ENCODE measurements at regions of chr5 and their contacts with region 1.

Region 1: DNA sequence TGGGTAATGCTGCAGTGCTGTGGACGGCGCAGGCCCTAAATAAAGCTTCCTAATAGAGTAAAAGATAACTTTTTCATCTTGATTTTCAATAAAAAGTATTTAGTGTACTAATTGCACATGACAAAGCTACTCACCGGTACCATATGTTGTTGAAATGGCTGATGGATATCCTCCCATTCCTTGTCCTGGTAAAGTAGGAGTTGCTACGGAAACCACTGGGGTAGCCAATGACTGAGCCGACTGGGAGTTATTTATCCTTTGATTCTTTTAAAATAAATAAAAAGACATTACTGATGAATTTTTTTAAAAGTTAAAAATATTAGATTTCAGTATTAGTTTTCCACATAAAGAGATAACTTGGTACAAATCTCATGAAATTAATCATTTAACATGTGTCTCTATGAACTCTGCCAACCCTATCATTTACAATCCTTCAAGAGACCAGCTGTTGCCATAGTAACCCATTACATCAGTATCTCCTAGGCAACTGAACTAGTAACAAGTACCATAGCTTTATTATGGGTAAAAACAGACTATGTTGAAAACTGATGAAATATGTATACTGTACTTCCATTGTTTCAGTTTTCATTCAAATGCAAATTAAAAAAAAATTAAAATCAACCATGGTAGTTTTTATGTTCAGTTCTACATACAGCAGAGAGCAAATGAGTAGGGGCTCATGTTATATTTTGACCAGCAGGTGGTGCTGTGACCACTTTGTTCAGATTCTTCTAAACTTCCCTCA is 153.7 kb downstream of the MEF2C start:
- DNase-seq: peak; percentile 71
- ATAC-seq: peak; percentile 63
- H3K4me3 Mint-ChIP-seq: no peak overlapping the region
- H3K27ac Mint-ChIP-seq: no peak overlapping the region
- H3K4me1 Mint-ChIP-seq: peaks cover 3% of the 10 kb centered on the region
- H3K27me3 Mint-ChIP-seq: peaks cover 9% of the 10 kb centered on the region

Region 2: DNA sequence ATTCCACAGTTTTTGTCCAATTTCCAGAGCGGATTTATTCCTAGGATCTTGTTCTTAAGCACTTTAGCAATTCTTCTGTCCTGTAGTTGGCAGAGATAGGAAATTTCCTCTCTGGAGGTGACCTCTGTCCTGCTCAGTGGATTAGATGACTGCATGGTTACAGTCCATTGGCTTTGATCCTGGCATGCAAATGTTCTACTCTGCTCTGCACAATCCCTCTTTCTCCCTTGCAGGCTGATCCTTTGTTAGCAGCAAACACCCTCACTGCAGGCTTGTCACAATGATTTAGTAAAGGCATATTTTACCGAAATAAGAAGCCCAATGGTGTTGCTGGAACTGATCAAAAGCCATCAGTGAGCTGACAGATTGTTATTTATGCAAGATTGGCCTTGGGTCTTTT is 1867.7 kb before region 1 on chr5:
- CTCF ChIA-PET with region 1: no interaction called
- POLR2A ChIA-PET with region 1: no interaction called
- intact Hi-C with region 1: no loop called
- DNase-seq: no peak
- ATAC-seq: no peak
- H3K4me3 Mint-ChIP-seq: no peak overlapping the region
- H3K27ac Mint-ChIP-seq: no peak overlapping the region
- H3K4me1 Mint-ChIP-seq: no peaks in the 10 kb centered on the region
- H3K27me3 Mint-ChIP-seq: peaks cover 6% of the 10 kb centered on the region

Region 3: GRCh38 chr5:88690409-88691229 is 38.6 kb before region 1 on chr5:
- CTCF ChIA-PET with region 1: interaction called, 12 read pairs
- POLR2A ChIA-PET with region 1: no interaction called
- intact Hi-C with region 1: no loop called
- DNase-seq: peak; percentile 82
- ATAC-seq: peak; percentile 82
- H3K4me3 Mint-ChIP-seq: peak overlapping the region; percentile 38
- H3K27ac Mint-ChIP-seq: no peak overlapping the region
- H3K4me1 Mint-ChIP-seq: peaks cover 15% of the 10 kb centered on the region
- H3K27me3 Mint-ChIP-seq: peaks cover 84% of the 10 kb centered on the region

Region 4: GRCh38 chr5:88761269-88761850 is 32.1 kb after region 1 on chr5:
- CTCF ChIA-PET with region 1: interaction called, 12 read pairs
- POLR2A ChIA-PET with region 1: no interaction called
- intact Hi-C with region 1: no loop called
- DNase-seq: no peak
- ATAC-seq: no peak
- H3K4me3 Mint-ChIP-seq: no peak overlapping the region
- H3K27ac Mint-ChIP-seq: no peak overlapping the region
- H3K4me1 Mint-ChIP-seq: no peaks in the 10 kb centered on the region
- H3K27me3 Mint-ChIP-seq: peaks cover 15% of the 10 kb centered on the region

Region 5: DNA sequence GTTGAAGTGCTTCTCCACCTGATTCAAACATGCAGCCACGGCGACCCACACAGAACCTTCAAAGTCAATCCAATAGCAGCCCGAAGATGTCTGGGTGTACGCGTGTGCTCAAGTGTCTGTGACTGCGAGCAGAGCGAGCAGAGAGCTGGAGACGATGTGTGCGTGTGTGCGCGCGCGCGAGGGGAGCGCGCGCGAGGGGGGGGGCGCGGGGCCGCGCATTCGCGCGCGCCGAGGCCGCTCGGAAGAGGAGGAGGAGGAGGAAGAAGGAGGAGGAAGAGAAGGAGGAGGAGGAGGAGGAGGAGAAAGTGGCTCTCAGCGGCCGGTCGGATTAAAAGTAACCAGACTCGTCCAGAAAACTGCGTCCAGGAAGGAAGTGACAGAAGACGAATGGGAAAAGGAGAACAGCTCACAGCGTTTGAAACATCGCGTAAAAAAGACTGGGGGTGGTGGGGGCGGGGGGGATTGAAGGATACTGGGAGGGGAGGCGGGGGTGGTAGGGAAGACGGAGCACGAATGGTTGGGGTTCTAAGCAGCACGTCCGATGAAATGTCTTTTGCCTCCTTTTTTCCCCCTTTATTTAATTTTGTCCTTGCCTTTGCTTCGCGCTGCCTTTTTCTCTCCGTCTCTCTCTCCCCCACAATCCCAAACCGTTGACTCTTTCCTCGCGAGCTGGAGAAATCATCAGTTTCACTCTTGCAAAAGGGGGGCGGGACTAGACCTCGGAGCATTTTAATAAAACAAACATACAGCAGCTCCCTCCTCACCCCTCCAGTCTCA is 154.0 kb after region 1 on chr5 and contains the start of gene MEF2C:
- CTCF ChIA-PET with region 1: interaction called, 3 read pairs
- POLR2A ChIA-PET with region 1: no interaction called
- intact Hi-C with region 1: loop called (anchors 5 to 10 kb)
- DNase-seq: peak; percentile 32
- ATAC-seq: peak; percentile 65
- H3K4me3 Mint-ChIP-seq: peak within 1 kb of the TSS; percentile 75
- H3K27ac Mint-ChIP-seq: no peak within 1 kb of the TSS
- H3K4me1 Mint-ChIP-seq: peaks cover 21% of the 10 kb centered on the region
- H3K27me3 Mint-ChIP-seq: peaks cover 48% of the 10 kb centered on the region
- total RNA-seq, gene MEF2C: 0.07 to 0.12 TPM

Region 6: DNA sequence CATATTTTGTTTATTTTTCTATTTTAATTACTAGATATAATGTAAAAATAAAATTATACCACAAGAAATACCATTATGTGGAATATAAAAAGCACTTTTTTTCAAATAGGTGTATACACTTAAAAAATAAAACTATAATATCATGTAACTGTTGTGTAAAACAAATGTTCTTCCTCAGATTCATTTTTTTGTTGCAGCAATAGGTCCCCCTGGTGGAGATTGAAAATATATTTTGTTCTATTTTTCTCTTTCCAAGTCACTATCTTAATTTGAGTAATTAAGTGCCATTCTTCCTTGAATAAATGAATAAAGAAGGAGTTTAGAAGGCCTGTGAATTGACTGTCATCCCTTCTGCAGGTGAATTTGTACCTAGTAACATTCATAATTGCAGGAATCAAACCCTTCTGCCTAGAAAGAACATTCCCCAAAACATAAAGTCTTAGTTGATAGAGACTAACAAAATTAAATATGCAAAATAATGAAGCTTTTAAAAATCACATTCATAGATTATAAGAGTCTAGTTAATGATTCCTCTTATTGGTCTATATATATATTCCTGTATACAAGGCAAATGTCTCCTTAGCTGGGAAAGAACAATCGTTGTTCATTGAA is 1656.9 kb after region 1 on chr5:
- CTCF ChIA-PET with region 1: no interaction called
- POLR2A ChIA-PET with region 1: no interaction called
- intact Hi-C with region 1: loop called (anchors 2 to 5 kb)
- DNase-seq: no peak
- ATAC-seq: no peak
- H3K4me3 Mint-ChIP-seq: no peak overlapping the region
- H3K27ac Mint-ChIP-seq: no peak overlapping the region
- H3K4me1 Mint-ChIP-seq: peaks cover 7% of the 10 kb centered on the region
- H3K27me3 Mint-ChIP-seq: no peaks in the 10 kb centered on the region

Region 7: DNA sequence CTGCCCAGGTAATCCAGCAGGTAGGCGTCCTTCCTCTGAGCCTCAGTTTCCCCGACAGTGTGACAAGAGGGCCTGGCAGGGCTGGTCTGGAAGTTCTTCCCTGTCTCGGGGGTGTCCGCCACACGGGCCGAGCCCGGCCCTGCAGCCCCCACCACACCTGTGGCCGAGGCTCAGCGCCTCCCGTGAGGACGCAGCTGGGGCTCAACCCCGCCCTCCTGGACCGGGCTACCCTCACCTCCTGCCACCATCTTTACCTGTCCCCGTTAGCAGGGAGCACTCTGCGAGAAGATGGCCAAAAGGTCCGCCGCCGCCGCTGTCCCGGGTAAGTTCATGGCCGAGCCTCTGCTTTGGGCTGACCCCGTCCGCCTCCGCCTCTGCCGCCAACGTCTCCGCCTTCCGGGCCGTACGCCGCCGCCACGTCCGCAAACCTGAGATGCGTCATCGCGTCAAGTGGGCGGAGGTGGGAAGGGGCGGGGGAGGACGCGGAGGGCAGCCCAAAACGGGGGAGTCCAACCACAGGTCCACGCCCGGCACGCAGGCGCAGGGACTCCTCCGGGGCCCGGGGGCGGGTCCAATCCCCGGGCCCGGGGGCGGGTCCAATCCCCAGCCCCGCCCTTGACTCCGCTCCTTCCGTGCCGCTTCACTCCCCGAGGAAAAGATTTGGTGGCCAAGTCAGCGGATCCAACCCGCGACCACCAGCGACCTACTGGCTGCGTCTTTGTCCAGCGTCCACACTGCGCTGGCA is 1800.1 kb after region 1 on chr5 and contains the start of gene LYSMD3:
- CTCF ChIA-PET with region 1: no interaction called
- POLR2A ChIA-PET with region 1: no interaction called
- intact Hi-C with region 1: loop called (anchors 5 to 10 kb)
- DNase-seq: peak; percentile 97
- ATAC-seq: peak; percentile 94
- H3K4me3 Mint-ChIP-seq: peak within 1 kb of the TSS; percentile 85
- H3K27ac Mint-ChIP-seq: peak within 1 kb of the TSS; percentile 95
- H3K4me1 Mint-ChIP-seq: peaks cover 27% of the 10 kb centered on the region
- H3K27me3 Mint-ChIP-seq: peaks cover 7% of the 10 kb centered on the region
- total RNA-seq, gene LYSMD3: 11.6 to 12.5 TPM